Panc1 (cell line): ENCODE measurements at regions of chr9 and their contacts with region 1.

Region 1: DNA sequence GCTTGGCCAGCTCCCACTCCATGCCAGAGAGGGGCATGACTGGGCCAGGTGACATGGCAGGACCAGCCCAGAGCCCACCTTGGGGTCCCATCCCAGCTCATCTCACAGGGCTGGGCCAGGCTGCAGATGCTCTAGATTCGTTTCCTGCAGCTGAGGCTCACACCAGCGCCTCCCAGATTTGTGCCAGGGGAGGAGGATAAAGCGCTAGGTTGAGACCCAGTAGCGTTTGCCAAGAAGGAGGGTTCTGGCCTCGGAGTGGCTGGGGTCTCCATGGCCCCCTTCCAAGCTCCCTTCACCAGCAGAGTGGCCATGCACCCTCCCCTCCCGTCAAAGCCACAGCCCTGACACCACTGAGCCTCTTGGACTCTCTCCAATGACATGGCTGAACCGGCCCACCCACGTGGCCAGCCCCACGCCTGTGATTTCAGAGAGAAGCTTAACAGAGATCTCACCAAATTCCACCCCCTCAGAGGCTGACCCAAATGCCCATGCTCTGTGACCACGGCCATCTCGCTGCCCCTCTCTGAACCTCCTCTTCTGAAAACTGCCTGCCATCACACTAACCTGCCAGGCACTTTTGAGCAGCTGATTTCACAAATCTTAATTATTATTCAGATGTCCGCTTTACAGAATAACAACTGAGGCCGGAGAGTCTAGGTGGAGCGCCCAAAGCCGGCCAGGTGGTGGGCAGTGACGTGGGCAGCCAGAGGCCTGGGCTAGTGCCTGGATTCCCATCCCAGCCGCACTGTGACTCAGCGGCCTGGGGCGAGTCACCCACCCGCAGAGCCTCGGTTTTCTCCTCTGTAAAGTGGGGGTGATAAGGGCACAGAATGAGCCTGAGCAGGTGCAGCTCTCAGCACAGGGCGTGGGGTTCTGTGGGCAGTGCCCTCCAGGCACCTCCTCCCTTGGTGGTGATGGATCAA is 155.7 kb downstream of the C9orf50 start:
- DNase-seq: no peak
- ATAC-seq: no peak
- H3K4me3 ChIP-seq: no peak overlapping the region
- H3K27ac ChIP-seq: peak overlapping the region; percentile 67
- H3K4me1 ChIP-seq: peaks cover 55% of the 10 kb centered on the region
- H3K27me3 ChIP-seq: no peaks in the 10 kb centered on the region
- CTCF ChIP-seq: no peak

Region 2: DNA sequence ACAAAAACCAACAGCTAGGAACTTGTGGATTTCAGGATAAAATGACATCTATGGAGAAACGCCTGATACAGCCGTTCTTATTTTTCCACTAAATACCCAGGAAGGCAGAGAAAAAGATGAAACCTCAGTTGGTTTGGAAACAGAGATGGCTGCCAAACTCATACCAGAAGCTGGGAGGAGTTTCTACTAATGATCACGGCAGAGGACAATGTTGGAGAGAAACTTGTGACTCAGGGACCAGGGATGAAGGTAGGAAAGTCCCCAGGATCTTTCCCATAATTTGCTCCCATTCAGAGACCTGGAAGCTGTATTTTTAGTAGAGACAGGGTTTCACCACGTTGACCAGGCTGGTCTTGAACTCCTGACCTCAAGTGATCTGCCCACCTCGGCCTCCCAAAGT is 100.0 kb before region 1 on chr9:
- CTCF ChIA-PET with region 1: no interaction called
- POLR2A ChIA-PET with region 1: interaction called, 13 read pairs
- in situ Hi-C with region 1: no loop called
- intact Hi-C with region 1: no loop called
- DNase-seq: no peak
- ATAC-seq: no peak
- H3K4me3 ChIP-seq: no peak overlapping the region
- H3K27ac ChIP-seq: peak overlapping the region; percentile 39; the same call in 1 of the 2 replicates
- H3K4me1 ChIP-seq: peaks cover 7% of the 10 kb centered on the region
- H3K27me3 ChIP-seq: no peaks in the 10 kb centered on the region
- CTCF ChIP-seq: no peak

Region 3: DNA sequence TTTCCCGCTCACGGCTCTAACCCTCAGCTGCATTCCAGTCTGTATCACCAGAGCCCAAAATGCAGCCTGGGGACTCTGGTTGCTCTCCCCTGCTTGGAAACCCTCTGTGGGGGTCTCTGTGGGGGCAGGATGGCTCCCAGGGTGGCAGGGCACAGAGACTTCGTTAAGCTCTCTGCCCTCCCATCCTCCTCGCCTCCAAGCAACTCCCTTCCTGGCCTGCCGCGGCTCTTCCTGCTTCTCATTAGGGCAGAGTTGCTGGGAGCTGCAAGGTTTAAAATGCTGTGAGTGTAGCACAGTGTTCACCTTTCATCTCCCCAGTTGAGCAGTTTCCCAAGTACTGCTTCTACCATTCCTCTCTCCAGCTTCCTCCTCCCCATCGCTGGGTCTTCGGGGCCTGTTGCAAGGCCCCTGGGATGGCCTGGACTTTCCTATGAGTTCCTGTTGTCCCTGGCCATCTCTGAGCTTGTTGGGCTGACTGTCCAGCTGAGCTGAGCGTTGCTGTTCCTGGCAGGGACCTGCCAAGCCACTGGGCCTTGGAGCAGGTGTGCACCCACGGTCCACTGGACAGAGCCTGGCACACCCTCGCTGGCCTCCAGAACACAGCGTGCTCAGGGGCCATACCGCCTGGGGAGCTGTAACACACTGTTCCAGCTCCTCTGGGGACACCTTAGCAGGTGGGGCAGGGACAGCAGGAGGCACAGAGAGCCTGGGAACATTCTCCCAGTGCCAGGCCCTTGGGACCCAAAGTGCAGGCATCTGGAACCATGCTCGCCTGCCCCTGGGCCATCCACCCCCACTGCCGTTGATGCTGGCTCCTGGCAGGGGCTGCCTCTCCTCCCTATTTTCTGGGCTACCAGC is 32.6 kb before region 1 on chr9:
- CTCF ChIA-PET with region 1: no interaction called
- POLR2A ChIA-PET with region 1: no interaction called
- in situ Hi-C with region 1: no loop called
- intact Hi-C with region 1: no loop called
- DNase-seq: no peak
- ATAC-seq: peak; percentile 69
- H3K4me3 ChIP-seq: no peak overlapping the region
- H3K27ac ChIP-seq: peak overlapping the region; percentile 79
- H3K4me1 ChIP-seq: peaks cover 23% of the 10 kb centered on the region
- H3K27me3 ChIP-seq: no peaks in the 10 kb centered on the region
- CTCF ChIP-seq: no peak